Transverse colon (tissue), 4 donors: ENCODE measurements at regions of chr3 and their contacts with region 1.

Region 1: DNA sequence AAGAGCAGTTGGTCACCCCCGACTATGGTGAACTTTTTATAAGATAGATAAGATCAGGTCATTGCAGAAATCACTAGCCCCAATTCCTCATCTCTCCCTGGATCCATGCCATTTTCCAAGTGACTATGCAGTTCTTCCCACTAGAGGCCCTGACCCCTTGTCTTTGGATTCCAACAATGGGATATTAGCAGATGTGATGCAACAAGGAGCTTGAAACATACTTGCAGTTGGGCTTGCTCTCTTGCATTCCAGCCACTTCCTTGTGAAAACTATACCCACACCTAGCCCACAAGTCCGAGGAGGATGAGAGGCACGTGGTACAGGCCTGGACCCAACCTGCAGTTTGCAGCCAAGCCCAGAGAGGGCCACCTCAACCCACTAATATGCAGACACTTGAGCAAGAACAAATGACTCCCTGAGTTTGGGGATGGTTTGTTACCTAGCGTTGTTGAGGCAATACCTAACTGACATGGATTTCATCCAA is 60.6 kb downstream of the SUCLG2 start:
- DNase-seq: no peak
- H3K4me3 ChIP-seq: no peak overlapping the region
- H3K27ac ChIP-seq: no peak overlapping the region
- H3K4me1 ChIP-seq: no peaks in the 10 kb centered on the region
- H3K27me3 ChIP-seq: no peaks in the 10 kb centered on the region
- CTCF ChIP-seq: no peak
- EP300 ChIP-seq: no peak
- POLR2A ChIP-seq: no peak

Region 2: DNA sequence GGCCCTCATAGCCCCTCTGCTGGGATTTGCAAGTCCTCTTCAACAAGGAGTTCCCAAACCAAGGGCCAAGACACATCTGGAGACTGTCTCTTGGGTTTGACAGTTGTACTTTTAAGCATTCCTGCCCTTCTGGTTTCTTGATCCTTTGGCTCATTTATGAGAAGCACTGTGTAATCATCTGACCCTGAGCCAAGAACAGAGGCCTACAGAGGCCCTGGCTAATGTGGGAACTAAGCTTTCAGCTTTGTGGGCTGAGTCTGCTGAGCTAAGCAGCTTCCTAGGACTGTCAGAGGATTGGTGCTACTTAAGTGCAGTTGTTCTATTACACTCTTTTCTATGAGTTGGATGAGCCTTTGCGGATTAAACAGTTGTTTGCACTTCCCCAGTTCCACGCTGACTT is 417.4 kb before region 1 on chr3:
- in situ Hi-C with region 1: no loop called
- intact Hi-C with region 1: no loop called
- DNase-seq: no peak
- H3K4me3 ChIP-seq: no peak overlapping the region
- H3K27ac ChIP-seq: no peak overlapping the region
- H3K4me1 ChIP-seq: no peaks in the 10 kb centered on the region
- H3K27me3 ChIP-seq: no peaks in the 10 kb centered on the region
- CTCF ChIP-seq: no peak
- EP300 ChIP-seq: no peak
- POLR2A ChIP-seq: no peak

Region 3: DNA sequence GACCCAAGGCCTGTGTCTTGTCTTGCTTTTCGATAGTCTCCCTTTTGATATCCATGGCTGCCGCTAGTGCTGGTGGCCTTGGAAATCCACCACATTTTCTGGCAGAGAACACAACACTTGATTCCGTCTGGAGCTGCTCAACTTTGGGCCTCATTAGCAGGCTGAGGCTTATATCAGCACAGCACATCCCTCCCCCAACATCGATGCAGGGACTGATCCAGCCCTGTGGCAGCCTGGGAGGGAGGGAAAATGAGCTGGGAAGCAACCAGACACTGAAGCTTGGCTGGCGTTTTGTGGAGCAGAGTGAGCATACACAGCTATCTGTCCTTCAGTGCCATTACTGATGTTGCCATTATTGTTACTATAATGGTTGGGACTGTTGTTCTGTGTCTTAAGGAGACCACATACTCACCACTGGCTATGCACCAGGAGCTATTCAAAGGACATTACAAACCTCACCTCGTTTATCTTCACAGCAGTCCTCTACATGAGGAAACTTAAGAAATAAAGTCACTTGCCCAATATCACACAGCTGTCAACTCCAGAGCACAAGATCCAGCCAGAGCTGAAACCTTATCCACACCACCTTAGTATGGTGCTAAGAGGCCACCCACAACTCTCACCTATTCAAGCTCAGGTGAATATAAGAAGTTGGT is 42.3 kb before region 1 on chr3:
- in situ Hi-C with region 1: no loop called
- intact Hi-C with region 1: loop called (anchors 2 kb)
- DNase-seq: no peak
- H3K4me3 ChIP-seq: no peak overlapping the region
- H3K27ac ChIP-seq: no peak overlapping the region
- H3K4me1 ChIP-seq: no peaks in the 10 kb centered on the region
- H3K27me3 ChIP-seq: no peaks in the 10 kb centered on the region
- CTCF ChIP-seq: no peak
- EP300 ChIP-seq: no peak
- POLR2A ChIP-seq: no peak